Naive thymus-derived CD4-positive, alpha-beta T cell (primary cell): ENCODE measurements at regions of chr2 and their contacts with region 1.

Region 1: DNA sequence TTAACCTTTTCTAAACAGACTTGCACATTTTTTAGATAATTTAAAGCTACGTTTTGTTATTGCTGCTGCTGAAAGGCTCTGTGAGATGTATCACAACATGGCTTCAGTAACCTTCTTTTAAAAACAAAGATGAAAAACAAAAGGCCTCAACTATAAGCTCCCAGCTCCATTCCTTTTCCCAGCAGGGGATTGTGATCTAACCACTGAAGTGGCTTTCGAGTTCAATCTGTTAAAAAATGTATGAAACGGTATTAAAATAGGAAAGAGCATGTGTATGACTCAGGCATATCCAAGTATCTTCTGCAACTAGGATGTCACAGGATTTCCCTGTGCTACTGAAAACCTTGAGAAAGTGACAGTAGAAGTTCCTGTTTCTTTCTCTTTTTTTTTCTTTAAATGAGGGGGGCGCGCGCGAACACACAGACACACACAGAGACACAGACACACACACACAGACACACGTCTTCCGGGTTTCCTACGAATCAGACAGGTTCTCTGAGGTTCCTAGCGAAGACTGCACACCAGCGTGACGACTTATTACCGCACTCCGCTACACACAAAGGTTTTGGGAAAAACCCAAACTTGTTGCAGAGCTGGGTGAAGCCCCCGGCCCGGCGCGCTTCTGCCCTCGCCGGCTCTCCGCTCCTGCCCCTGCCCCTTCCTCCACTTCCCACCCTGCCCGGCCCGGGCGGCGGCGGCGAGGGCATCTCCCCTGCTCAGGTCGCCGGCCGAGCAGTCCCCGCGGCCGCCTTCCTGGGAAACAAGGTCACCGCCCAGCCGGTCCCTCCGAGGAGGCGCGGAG is 86.8 kb downstream of the RBMS1 start:
- DNase-seq: peak; percentile 60 to 95 (median 85)
- ATAC-seq: peak; percentile 92
- H3K4me3 ChIP-seq: peak overlapping the region; percentile 57
- H3K4me3 Mint-ChIP-seq: peak overlapping the region; percentile 87 to 99 (median 92)
- H3K27ac ChIP-seq: peak overlapping the region; percentile 99
- H3K27ac Mint-ChIP-seq: peak overlapping the region; percentile 90 to 99 (median 95)
- H3K4me1 ChIP-seq: peaks cover 54 to 64% of the 10 kb centered on the region in 2 donors
- H3K4me1 Mint-ChIP-seq: peaks cover 37 to 89% (median 80%) of the 10 kb centered on the region in 7 donors
- H3K27me3 ChIP-seq: no peaks in the 10 kb centered on the region
- H3K27me3 Mint-ChIP-seq: peaks cover 0 to 4% (median 0%) of the 10 kb centered on the region in 5 donors

Region 2: GRCh38 chr2:159904127-159904958 is 502.4 kb before region 1 on chr2:
- CTCF ChIA-PET with region 1: no interaction called
- POLR2A ChIA-PET with region 1: no interaction called
- intact Hi-C with region 1: no loop called
- DNase-seq: peak; percentile 70 to 85 (median 83)
- ATAC-seq: peak; percentile 91
- H3K4me3 ChIP-seq: peak within 1 kb of the TSS; percentile 95
- H3K4me3 Mint-ChIP-seq: peak within 1 kb of the TSS; percentile 93 to 100 (median 98)
- H3K27ac ChIP-seq: peak within 1 kb of the TSS; percentile 87
- H3K27ac Mint-ChIP-seq: peak within 1 kb of the TSS; percentile 96 to 100 (median 98)
- H3K4me1 ChIP-seq: peaks cover 3 to 8% of the 10 kb centered on the region in 2 donors
- H3K4me1 Mint-ChIP-seq: peaks cover 24 to 52% (median 41%) of the 10 kb centered on the region in 7 donors
- H3K27me3 ChIP-seq: no peaks in the 10 kb centered on the region
- H3K27me3 Mint-ChIP-seq: peaks cover 0 to 3% (median 0%) of the 10 kb centered on the region in 5 donors

Region 3: GRCh38 chr2:160294339-160294803 is 112.4 kb before region 1 on chr2:
- CTCF ChIA-PET with region 1: no interaction called
- POLR2A ChIA-PET with region 1: no interaction called
- intact Hi-C with region 1: loop called in 1 of 2 experiments (anchors 1 kb)
- DNase-seq: peak in 1 of 9 donors; percentile 28
- ATAC-seq: peak; percentile 74
- H3K4me3 ChIP-seq: no peak overlapping the region
- H3K4me3 Mint-ChIP-seq: no peak overlapping the region
- H3K27ac ChIP-seq: no peak overlapping the region
- H3K27ac Mint-ChIP-seq: peak overlapping the region in 4 of 9 donors; percentile 15 to 49 (median 33)
- H3K4me1 ChIP-seq: peaks cover 0 to 32% of the 10 kb centered on the region in 2 donors
- H3K4me1 Mint-ChIP-seq: peaks cover 37 to 86% (median 66%) of the 10 kb centered on the region in 7 donors
- H3K27me3 ChIP-seq: no peaks in the 10 kb centered on the region
- H3K27me3 Mint-ChIP-seq: no peaks in the 10 kb centered on the region

Region 4: DNA sequence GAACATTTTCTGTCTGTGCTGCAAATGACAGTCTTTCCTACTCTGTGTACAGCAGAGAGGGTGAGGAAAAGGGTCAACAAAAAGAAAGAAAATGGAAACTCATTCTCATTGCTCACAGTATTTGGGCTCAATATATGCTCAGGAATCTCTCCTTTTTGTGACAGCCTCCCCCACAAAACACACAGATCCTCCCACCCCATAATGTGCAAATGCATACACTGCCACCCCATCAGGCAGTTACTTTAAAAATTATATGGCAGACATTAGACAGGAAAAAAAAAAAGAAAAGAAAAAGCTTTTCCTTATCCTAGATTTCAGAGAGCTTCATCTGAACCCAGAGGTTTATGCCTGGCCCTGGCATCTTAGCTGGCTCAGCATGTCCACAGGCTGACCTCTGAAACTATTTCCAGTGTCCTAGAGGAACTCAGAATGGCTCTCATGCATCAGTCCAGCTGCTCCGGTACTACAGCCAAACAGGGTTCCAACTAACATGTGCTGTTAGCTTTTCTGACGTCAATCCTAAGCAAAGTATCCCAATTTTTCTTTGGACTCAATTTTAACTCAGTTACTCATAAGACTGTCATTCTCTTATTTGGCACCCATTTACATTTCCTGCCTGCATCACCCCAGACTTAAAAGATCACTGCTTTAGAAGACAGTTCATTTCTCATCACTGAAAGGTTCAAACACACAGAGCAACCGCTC is 19.1 kb before region 1 on chr2:
- CTCF ChIA-PET with region 1: no interaction called
- POLR2A ChIA-PET with region 1: interaction called, 8 read pairs
- intact Hi-C with region 1: loop called (anchors 2 kb)
- DNase-seq: no peak
- ATAC-seq: peak; percentile 21
- H3K4me3 ChIP-seq: no peak overlapping the region
- H3K4me3 Mint-ChIP-seq: peak overlapping the region; percentile 60 to 78 (median 74)
- H3K27ac ChIP-seq: no peak overlapping the region
- H3K27ac Mint-ChIP-seq: peak overlapping the region; percentile 53 to 89 (median 81)
- H3K4me1 ChIP-seq: peaks cover 50 to 53% of the 10 kb centered on the region in 2 donors
- H3K4me1 Mint-ChIP-seq: peaks cover 11 to 96% (median 66%) of the 10 kb centered on the region in 7 donors
- H3K27me3 ChIP-seq: no peaks in the 10 kb centered on the region
- H3K27me3 Mint-ChIP-seq: no peaks in the 10 kb centered on the region

Region 5: GRCh38 chr2:160429248-160430000 is 22.6 kb after region 1 on chr2:
- CTCF ChIA-PET with region 1: interaction called, 15 read pairs
- POLR2A ChIA-PET with region 1: interaction called, 57 read pairs
- intact Hi-C with region 1: loop called (anchors 1 kb)
- DNase-seq: peak in 6 of 9 donors; percentile 44 to 67 (median 58)
- ATAC-seq: peak; percentile 70
- H3K4me3 ChIP-seq: no peak overlapping the region
- H3K4me3 Mint-ChIP-seq: peak overlapping the region in 6 of 10 donors; percentile 7 to 94 (median 30)
- H3K27ac ChIP-seq: peak overlapping the region; percentile 69
- H3K27ac Mint-ChIP-seq: peak overlapping the region; percentile 51 to 93 (median 89)
- H3K4me1 ChIP-seq: peaks cover 33 to 35% of the 10 kb centered on the region in 2 donors
- H3K4me1 Mint-ChIP-seq: peaks cover 32 to 91% (median 74%) of the 10 kb centered on the region in 7 donors
- H3K27me3 ChIP-seq: no peaks in the 10 kb centered on the region
- H3K27me3 Mint-ChIP-seq: no peaks in the 10 kb centered on the region

Region 6: DNA sequence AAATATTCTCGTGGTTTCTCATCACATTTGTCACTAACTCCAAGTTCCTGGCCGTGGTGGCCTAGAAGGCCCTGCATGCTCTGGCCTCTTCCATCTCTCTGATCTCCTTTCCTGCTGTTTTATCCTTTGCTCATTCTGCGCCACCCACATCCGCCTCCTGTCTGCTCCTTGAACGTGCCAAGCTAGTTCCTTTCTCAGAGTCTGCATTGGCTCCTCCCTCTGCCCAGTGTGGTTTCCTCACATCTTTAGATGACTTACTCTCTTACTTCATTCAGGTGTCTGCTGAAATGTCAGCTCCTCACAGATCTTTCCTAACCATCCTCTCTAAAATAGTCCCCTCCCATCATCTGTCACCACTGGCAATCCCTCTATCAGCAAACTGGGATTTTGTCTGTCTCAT is 245.4 kb after region 1 on chr2:
- CTCF ChIA-PET with region 1: no interaction called
- POLR2A ChIA-PET with region 1: no interaction called
- intact Hi-C with region 1: loop called in 1 of 2 experiments (anchors 5 kb)
- DNase-seq: peak; percentile 20 to 81 (median 72)
- ATAC-seq: peak; percentile 97
- H3K4me3 ChIP-seq: no peak overlapping the region
- H3K4me3 Mint-ChIP-seq: peak overlapping the region; percentile 13 to 79 (median 52)
- H3K27ac ChIP-seq: no peak overlapping the region
- H3K27ac Mint-ChIP-seq: peak overlapping the region in 8 of 9 donors; percentile 1 to 47 (median 8)
- H3K4me1 ChIP-seq: peaks cover 11 to 22% of the 10 kb centered on the region in 2 donors
- H3K4me1 Mint-ChIP-seq: peaks cover 23 to 45% (median 34%) of the 10 kb centered on the region in 7 donors
- H3K27me3 ChIP-seq: no peaks in the 10 kb centered on the region
- H3K27me3 Mint-ChIP-seq: peaks cover 3 to 10% (median 8%) of the 10 kb centered on the region in 5 donors

Region 7: GRCh38 chr2:160674146-160674750 is 267.5 kb after region 1 on chr2:
- CTCF ChIA-PET with region 1: no interaction called
- POLR2A ChIA-PET with region 1: no interaction called
- intact Hi-C with region 1: no loop called
- DNase-seq: no peak
- ATAC-seq: no peak
- H3K4me3 ChIP-seq: no peak overlapping the region
- H3K4me3 Mint-ChIP-seq: no peak overlapping the region
- H3K27ac ChIP-seq: no peak overlapping the region
- H3K27ac Mint-ChIP-seq: peak overlapping the region in 1 of 9 donors; percentile 72
- H3K4me1 ChIP-seq: no peaks in the 10 kb centered on the region
- H3K4me1 Mint-ChIP-seq: no peaks in the 10 kb centered on the region
- H3K27me3 ChIP-seq: no peaks in the 10 kb centered on the region
- H3K27me3 Mint-ChIP-seq: peaks cover 0 to 5% (median 0%) of the 10 kb centered on the region in 5 donors

Region 8: GRCh38 chr2:161160226-161161069 is 753.7 kb after region 1 on chr2 and contains the start of gene TANK:
- CTCF ChIA-PET with region 1: no interaction called
- POLR2A ChIA-PET with region 1: no interaction called
- intact Hi-C with region 1: loop called (anchors 1 to 5 kb)
- DNase-seq: peak; percentile 72 to 90 (median 88)
- ATAC-seq: peak; percentile 96
- H3K4me3 ChIP-seq: peak within 1 kb of the TSS; percentile 75
- H3K4me3 Mint-ChIP-seq: peak within 1 kb of the TSS; percentile 95 to 100 (median 98)
- H3K27ac ChIP-seq: peak within 1 kb of the TSS; percentile 84
- H3K27ac Mint-ChIP-seq: peak within 1 kb of the TSS; percentile 95 to 99 (median 98)
- H3K4me1 ChIP-seq: peaks cover 19 to 39% of the 10 kb centered on the region in 2 donors
- H3K4me1 Mint-ChIP-seq: peaks cover 21 to 64% (median 60%) of the 10 kb centered on the region in 7 donors
- H3K27me3 ChIP-seq: no peaks in the 10 kb centered on the region
- H3K27me3 Mint-ChIP-seq: no peaks in the 10 kb centered on the region
- total RNA-seq, gene TANK: 57.4 to 142 (median 62.4) TPM